Endothelial cell of umbilical vein (primary cell): ENCODE measurements at regions of chr11 and their contacts with region 1.

Region 1: DNA sequence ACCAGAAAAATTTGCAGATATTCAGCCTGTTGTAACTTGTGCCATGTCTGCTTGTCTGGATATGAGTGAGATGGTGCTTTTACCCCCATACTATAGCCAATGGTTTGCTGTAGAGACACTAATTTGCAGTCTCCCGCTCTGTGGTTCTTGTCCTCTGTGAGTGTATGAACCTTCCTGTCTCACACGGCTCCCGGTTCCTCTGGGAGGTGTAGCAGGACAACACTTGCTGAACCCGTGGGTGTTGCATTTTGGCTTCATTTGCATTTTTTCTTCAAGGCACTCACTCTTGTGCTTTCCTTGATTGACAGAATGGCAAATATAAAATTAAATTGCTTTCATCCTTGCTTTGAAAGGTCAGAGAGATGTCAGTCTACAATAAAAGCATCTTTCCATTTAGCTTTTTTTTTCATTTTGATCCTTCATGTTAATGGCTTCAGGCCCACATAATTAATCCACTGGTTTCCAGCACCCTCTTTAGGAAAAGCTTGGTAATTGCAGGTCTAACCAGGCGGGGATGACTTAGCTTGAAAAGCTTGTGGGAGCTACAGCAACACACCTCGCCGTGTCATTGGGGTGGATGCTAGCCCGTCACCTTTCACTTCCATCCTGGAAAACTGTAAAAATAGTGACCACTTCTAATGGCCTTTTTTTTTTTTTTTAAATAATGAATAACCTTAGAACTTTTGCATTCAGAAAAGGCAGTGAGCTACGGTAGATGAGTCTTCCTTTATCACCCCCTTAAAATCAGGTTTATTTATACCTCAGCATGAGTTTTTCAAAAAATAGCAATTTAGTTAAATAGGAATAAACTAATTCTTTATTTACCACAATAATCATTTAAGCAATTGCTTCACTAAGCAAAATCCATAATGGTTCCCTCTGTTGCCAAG is 27.4 kb upstream of the ST14 start:
- DNase-seq: peak; percentile 83
- H3K4me3 ChIP-seq: no peak overlapping the region
- H3K27ac ChIP-seq: no peak overlapping the region
- H3K4me1 ChIP-seq: no peaks in the 10 kb centered on the region
- H3K27me3 ChIP-seq: no peaks in the 10 kb centered on the region
- CTCF ChIP-seq: peak; percentile 67 to 84
- POLR2A ChIP-seq: no peak

Region 2: DNA sequence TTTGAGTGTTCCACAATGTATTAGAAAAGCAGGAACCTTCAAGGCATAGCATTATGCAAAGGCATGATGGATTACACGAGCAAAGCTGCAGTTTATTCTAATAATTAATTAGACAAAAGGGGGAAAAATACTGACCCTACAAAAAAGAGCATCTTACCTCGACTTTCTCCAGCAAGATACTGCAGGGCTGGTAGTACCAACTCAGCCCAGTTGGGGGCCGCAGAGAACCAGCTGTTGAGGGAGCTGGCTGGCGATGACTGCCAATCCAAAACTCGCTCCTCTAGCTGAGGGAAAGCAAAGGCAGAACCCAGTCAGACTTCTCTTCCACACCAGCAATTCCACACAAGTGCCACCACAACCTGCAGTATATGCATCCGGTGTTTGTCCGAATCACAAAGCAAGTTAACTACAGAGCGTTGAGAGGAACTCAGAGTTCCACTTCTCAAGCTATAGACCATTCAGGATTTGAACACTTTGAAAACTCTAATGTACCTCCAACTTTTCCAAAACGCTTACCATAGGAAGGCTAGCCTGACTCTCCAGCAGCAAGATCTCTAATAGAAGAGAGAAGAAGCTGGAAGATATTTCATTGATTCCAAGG is 250.5 kb before region 1 on chr11:
- CTCF ChIA-PET with region 1: interaction called, 48 read pairs
- POLR2A ChIA-PET with region 1: interaction called, 3 read pairs
- dilution Hi-C with region 1: no loop called
- intact Hi-C with region 1: loop called (anchors 1 kb)
- DNase-seq: peak; percentile 41
- H3K4me3 ChIP-seq: no peak overlapping the region
- H3K27ac ChIP-seq: no peak overlapping the region
- H3K4me1 ChIP-seq: no peaks in the 10 kb centered on the region
- H3K27me3 ChIP-seq: no peaks in the 10 kb centered on the region
- CTCF ChIP-seq: peak; percentile 59 to 68
- POLR2A ChIP-seq: no peak

Region 3: DNA sequence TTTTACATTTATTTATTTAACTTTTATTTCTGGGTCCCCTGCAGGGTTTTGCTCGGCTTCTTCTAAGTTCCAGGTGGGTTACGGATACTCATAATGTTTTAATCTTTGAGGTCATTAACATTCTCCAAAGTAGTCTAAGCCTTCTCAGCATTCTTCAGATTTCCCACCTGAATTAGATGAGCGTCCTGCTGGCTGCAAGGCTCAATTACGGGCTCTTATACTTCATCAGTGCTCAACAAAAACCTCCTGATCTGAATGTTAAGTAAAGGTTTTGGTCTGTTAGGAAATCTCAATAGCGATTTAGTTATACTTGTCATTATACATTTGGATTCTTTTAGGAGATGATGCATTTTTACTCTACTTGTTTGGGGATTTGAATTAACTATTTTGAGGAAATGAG is 209.5 kb before region 1 on chr11:
- CTCF ChIA-PET with region 1: interaction called, 399 read pairs
- POLR2A ChIA-PET with region 1: interaction called, 7 read pairs
- dilution Hi-C with region 1: no loop called
- intact Hi-C with region 1: loop called (anchors 1 kb)
- DNase-seq: no peak
- H3K4me3 ChIP-seq: no peak overlapping the region
- H3K27ac ChIP-seq: no peak overlapping the region
- H3K4me1 ChIP-seq: no peaks in the 10 kb centered on the region
- H3K27me3 ChIP-seq: no peaks in the 10 kb centered on the region
- CTCF ChIP-seq: no peak
- POLR2A ChIP-seq: no peak

Region 4: GRCh38 chr11:129973068-129973467 is 159.1 kb before region 1 on chr11:
- CTCF ChIA-PET with region 1: interaction called, 13 read pairs
- POLR2A ChIA-PET with region 1: no interaction called
- dilution Hi-C with region 1: no loop called
- intact Hi-C with region 1: no loop called
- DNase-seq: no peak
- H3K4me3 ChIP-seq: no peak overlapping the region
- H3K27ac ChIP-seq: no peak overlapping the region
- H3K4me1 ChIP-seq: no peaks in the 10 kb centered on the region
- H3K27me3 ChIP-seq: no peaks in the 10 kb centered on the region
- CTCF ChIP-seq: no peak
- POLR2A ChIP-seq: no peak

Region 5: GRCh38 chr11:130076778-130077481 is 55.3 kb before region 1 on chr11:
- CTCF ChIA-PET with region 1: interaction called, 52 read pairs
- POLR2A ChIA-PET with region 1: interaction called, 4 read pairs
- dilution Hi-C with region 1: no loop called
- intact Hi-C with region 1: no loop called
- DNase-seq: no peak
- H3K4me3 ChIP-seq: no peak overlapping the region
- H3K27ac ChIP-seq: no peak overlapping the region
- H3K4me1 ChIP-seq: peaks cover 4% of the 10 kb centered on the region
- H3K27me3 ChIP-seq: no peaks in the 10 kb centered on the region
- CTCF ChIP-seq: no peak
- POLR2A ChIP-seq: no peak

Region 6: GRCh38 chr11:130145975-130146776 is 14.0 kb after region 1 on chr11:
- CTCF ChIA-PET with region 1: interaction called, 29 read pairs
- POLR2A ChIA-PET with region 1: no interaction called
- dilution Hi-C with region 1: no loop called
- intact Hi-C with region 1: no loop called
- DNase-seq: peak; percentile 26
- H3K4me3 ChIP-seq: no peak overlapping the region
- H3K27ac ChIP-seq: no peak overlapping the region
- H3K4me1 ChIP-seq: peaks cover 6% of the 10 kb centered on the region
- H3K27me3 ChIP-seq: no peaks in the 10 kb centered on the region
- CTCF ChIP-seq: peak; percentile 15 to 41
- POLR2A ChIP-seq: no peak

Region 7: DNA sequence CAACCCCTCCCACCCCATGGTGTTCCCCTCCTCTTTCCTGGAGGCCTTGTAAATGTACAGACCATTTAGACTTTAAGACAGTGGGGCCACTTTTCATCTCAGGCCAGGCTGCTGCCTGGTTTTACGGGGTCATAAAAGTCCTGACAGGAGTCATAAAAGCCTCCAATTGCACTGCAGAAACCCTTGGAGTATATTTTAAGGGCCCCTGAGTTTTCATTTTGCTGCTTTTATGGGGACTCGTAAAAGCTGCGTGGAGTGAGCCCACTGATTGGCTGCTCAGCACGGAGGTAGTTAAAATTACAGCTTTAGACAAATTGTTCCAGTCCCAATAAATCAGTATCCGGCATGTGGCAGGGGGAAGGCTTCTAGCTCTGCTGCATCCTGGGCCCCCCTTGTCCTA is 1865.8 kb after region 1 on chr11:
- CTCF ChIA-PET with region 1: no interaction called
- POLR2A ChIA-PET with region 1: no interaction called
- dilution Hi-C with region 1: no loop called
- intact Hi-C with region 1: no loop called
- DNase-seq: no peak
- H3K4me3 ChIP-seq: no peak overlapping the region
- H3K27ac ChIP-seq: no peak overlapping the region
- H3K4me1 ChIP-seq: no peaks in the 10 kb centered on the region
- H3K27me3 ChIP-seq: no peaks in the 10 kb centered on the region
- CTCF ChIP-seq: no peak
- POLR2A ChIP-seq: no peak